CD4-positive, alpha-beta T cell (primary cell): ENCODE measurements at regions of chr5 and their contacts with region 1.

Region 1: DNA sequence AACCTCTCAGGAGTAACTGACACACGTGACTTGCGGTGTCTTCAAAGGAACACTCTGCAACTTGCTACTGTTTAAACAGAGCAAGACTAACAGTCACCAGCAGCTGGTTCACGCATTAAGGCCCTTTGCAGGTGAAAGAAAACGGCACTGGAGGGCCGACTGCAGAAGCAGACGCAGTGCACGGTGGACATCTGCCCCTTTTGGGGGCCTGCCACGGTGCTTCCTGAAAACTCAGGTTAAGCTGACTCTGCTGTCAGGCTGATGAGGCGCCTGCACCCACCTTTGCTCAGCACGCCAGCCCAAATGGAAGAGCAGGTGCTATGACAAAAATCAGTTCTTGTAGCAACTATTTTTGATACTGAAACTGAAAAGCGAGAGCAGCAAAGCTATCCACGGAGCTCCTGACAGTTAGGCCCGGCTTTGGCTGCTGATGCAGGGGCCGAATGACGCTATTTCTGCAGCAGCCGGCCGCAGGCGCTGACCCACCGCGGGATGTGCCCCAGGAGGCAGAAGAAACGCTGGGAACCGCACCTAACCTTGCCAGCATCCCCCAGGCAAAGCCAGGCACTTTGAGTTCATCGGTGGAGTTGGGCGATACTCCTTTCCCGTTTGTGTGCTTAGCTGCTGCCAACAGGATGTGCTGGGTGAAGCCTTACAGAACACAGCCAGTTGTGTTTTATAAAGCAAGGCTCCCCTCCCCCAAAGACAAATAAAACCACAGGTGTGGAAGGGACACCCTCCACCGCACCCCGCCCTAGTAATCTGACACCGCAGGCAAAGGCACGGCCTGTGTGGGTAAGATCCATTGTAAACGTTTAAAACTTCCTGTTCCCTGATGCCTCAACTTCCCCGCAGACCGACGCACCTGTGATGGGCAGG is 21.1 kb upstream of the TERT start:
- DNase-seq: peak; percentile 34 to 89 (median 58)
- ATAC-seq: peak; percentile 66
- H3K4me3 ChIP-seq: peak overlapping the region; percentile 58
- H3K4me3 Mint-ChIP-seq: peak overlapping the region; percentile 81
- H3K27ac ChIP-seq: peak overlapping the region; percentile 57 to 67
- H3K27ac Mint-ChIP-seq: peak overlapping the region; percentile 95
- H3K4me1 ChIP-seq: peaks cover 62% of the 10 kb centered on the region
- H3K4me1 Mint-ChIP-seq: peaks cover 66% of the 10 kb centered on the region
- H3K27me3 ChIP-seq: no peaks in the 10 kb centered on the region
- H3K27me3 Mint-ChIP-seq: no peaks in the 10 kb centered on the region
- CTCF ChIP-seq: no peak

Region 2: GRCh38 chr5:1255081-1255561 is 60.8 kb before region 1 on chr5:
- CTCF ChIA-PET with region 1: no interaction called
- POLR2A ChIA-PET with region 1: interaction called, 21 read pairs
- intact Hi-C with region 1: loop called (anchors 1 to 10 kb)
- DNase-seq: peak; percentile 19 to 77 (median 54)
- ATAC-seq: peak; percentile 90
- H3K4me3 ChIP-seq: peak overlapping the region; percentile 37
- H3K4me3 Mint-ChIP-seq: peak overlapping the region; percentile 86
- H3K27ac ChIP-seq: no peak overlapping the region
- H3K27ac Mint-ChIP-seq: peak overlapping the region; percentile 70
- H3K4me1 ChIP-seq: peaks cover 23% of the 10 kb centered on the region
- H3K4me1 Mint-ChIP-seq: peaks cover 21% of the 10 kb centered on the region
- H3K27me3 ChIP-seq: no peaks in the 10 kb centered on the region
- H3K27me3 Mint-ChIP-seq: no peaks in the 10 kb centered on the region
- CTCF ChIP-seq: peak; percentile 30

Region 3: GRCh38 chr5:1294835-1295649 is 20.9 kb before region 1 on chr5 and contains the start of gene TERT:
- CTCF ChIA-PET with region 1: no interaction called
- POLR2A ChIA-PET with region 1: interaction called, 44 read pairs
- intact Hi-C with region 1: loop called (anchors 2 kb)
- DNase-seq: peak; percentile 66 to 93 (median 79)
- ATAC-seq: peak; percentile 86
- H3K4me3 ChIP-seq: peak within 1 kb of the TSS; percentile 34
- H3K4me3 Mint-ChIP-seq: peak within 1 kb of the TSS; percentile 48
- H3K27ac ChIP-seq: no peak within 1 kb of the TSS
- H3K27ac Mint-ChIP-seq: no peak within 1 kb of the TSS
- H3K4me1 ChIP-seq: peaks cover 22% of the 10 kb centered on the region
- H3K4me1 Mint-ChIP-seq: peaks cover 4% of the 10 kb centered on the region
- H3K27me3 ChIP-seq: no peaks in the 10 kb centered on the region
- H3K27me3 Mint-ChIP-seq: no peaks in the 10 kb centered on the region
- CTCF ChIP-seq: no peak
- total RNA-seq, gene TERT: 0.55 to 0.84 TPM

Region 4: DNA sequence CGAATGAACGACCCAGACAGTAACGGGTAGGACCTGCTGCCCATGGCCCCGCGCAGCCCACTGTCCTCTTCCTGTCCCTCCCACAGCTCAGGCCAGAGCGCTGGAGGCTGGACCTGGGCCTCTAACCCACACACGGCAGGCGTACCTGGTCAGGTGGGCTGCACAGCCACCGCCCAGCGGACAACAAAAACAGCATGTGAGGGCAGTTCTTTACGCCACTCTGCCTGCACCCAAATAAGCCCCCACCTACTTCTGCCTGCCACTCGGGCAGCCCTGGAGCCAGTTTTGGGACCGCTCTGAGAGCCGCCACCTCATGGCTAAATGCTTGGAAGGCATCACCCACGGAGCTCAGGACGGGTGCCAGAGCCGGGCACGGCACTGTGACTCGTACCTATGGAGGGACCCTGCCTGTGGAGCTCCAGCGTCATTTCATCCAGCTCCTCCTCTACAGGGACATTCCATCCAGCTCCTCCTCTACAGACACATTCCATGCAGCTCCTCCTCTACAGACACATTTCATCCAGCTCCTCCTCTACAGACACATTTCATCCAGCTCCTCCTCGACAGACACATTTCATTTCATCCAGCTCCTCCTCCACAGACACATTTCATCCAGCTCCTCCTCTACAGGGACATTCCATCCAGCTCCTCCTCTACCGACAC is 10.1 kb after region 1 on chr5:
- CTCF ChIA-PET with region 1: no interaction called
- POLR2A ChIA-PET with region 1: interaction called, 10 read pairs
- intact Hi-C with region 1: no loop called
- DNase-seq: peak in 2 of 14 experiments; percentile 11 to 17
- ATAC-seq: no peak
- H3K4me3 ChIP-seq: no peak overlapping the region
- H3K4me3 Mint-ChIP-seq: no peak overlapping the region
- H3K27ac ChIP-seq: no peak overlapping the region
- H3K27ac Mint-ChIP-seq: no peak overlapping the region
- H3K4me1 ChIP-seq: no peaks in the 10 kb centered on the region
- H3K4me1 Mint-ChIP-seq: no peaks in the 10 kb centered on the region
- H3K27me3 ChIP-seq: no peaks in the 10 kb centered on the region
- H3K27me3 Mint-ChIP-seq: no peaks in the 10 kb centered on the region
- CTCF ChIP-seq: no peak

Region 5: DNA sequence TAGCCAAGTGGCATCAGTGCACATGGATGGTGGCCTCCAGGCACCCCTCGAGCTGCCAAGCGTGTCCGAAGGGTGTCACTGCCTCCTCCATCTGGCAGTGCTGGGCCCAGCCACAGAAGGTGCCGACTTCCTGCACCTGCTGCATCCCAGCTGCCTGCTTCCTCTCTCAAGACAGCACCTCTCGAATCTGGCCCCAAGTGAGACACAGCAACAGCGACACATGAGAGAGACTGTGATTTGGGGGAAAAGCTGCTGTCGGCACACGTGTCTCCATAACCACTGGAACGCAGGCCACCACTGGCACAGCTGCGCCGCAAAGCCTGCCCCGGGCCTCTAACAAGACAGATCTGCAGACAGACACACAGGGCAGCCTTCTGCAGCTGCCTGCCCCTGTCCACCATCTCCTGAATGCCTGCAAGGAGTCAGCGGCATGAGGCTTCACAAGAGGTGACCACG is 20.2 kb after region 1 on chr5:
- CTCF ChIA-PET with region 1: no interaction called
- POLR2A ChIA-PET with region 1: interaction called, 22 read pairs
- intact Hi-C with region 1: no loop called
- DNase-seq: peak in 1 of 14 experiments; percentile 25
- ATAC-seq: peak; percentile 55
- H3K4me3 ChIP-seq: no peak overlapping the region
- H3K4me3 Mint-ChIP-seq: peak overlapping the region; percentile 25
- H3K27ac ChIP-seq: no peak overlapping the region
- H3K27ac Mint-ChIP-seq: peak overlapping the region; percentile 63
- H3K4me1 ChIP-seq: peaks cover 19% of the 10 kb centered on the region
- H3K4me1 Mint-ChIP-seq: peaks cover 25% of the 10 kb centered on the region
- H3K27me3 ChIP-seq: no peaks in the 10 kb centered on the region
- H3K27me3 Mint-ChIP-seq: no peaks in the 10 kb centered on the region
- CTCF ChIP-seq: no peak

Region 6: GRCh38 chr5:2591777-2592450 is 1276.0 kb after region 1 on chr5:
- CTCF ChIA-PET with region 1: no interaction called
- POLR2A ChIA-PET with region 1: no interaction called
- intact Hi-C with region 1: no loop called
- DNase-seq: no peak
- ATAC-seq: no peak
- H3K4me3 ChIP-seq: no peak overlapping the region
- H3K4me3 Mint-ChIP-seq: no peak overlapping the region
- H3K27ac ChIP-seq: no peak overlapping the region
- H3K27ac Mint-ChIP-seq: no peak overlapping the region
- H3K4me1 ChIP-seq: no peaks in the 10 kb centered on the region
- H3K4me1 Mint-ChIP-seq: no peaks in the 10 kb centered on the region
- H3K27me3 ChIP-seq: no peaks in the 10 kb centered on the region
- H3K27me3 Mint-ChIP-seq: no peaks in the 10 kb centered on the region
- CTCF ChIP-seq: no peak